Activated CD4-positive, alpha-beta T cell treated with anti-CD3 and anti-CD28 coated beads for 36 hours (primary cell): ENCODE measurements at regions of chr5 and their contacts with region 1.

Region 1: DNA sequence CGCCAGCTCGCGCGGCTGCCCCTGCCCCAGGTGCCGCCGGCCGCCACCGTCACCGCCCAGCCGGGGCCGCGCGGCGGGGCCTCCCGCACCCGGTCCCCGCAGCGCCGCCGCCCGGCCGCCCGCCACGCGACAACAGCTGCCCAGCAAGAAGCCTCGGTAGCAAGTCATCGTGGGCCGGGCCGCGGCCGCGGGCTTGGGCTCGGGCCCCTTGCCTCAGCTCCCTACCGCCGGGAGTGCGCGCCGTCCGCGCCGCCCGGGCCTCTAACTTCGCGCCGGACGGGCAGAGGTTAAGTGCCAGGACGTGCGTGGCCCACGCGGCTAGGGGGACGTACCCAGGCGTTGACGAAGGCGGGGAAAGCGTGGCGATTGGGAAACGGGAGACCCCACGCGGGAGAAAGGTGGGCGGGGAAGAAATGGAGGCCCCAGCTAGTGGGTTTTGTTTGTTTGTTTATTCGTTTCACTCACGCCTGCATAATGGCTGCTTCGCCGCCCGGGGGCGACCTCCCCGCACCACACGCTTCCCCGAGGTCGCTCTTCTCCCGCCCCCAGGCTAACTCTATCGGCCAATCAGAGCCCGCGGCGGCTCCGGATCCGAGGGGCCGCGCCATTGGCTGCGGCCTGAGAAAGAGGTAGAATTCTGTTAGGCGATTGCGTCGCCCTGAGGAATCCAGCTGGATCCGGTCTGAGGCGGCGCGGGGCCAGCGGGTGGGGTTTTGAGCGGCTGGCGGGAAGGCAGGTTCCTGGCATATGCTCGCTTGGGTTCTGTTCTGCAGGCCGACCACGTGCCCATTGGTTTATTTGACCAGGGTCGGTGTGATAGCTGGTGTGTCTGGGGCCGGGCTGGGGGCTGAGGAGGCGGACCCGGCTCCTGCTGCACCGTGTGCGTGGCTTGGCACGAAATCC is at the start of gene NADK2:
- DNase-seq: peak; percentile 97
- ATAC-seq: peak; percentile 94
- H3K4me3 Mint-ChIP-seq: peak within 1 kb of the TSS; percentile 76
- H3K27ac Mint-ChIP-seq: peak within 1 kb of the TSS; percentile 98
- H3K4me1 Mint-ChIP-seq: peaks cover 44% of the 10 kb centered on the region
- H3K27me3 Mint-ChIP-seq: no peaks in the 10 kb centered on the region
- total RNA-seq, gene NADK2: 16.1 to 19.3 TPM

Region 2: GRCh38 chr5:34929150-34929719 is 1312.6 kb before region 1 on chr5 and contains the start of gene DNAJC21:
- CTCF ChIA-PET with region 1: no interaction called
- POLR2A ChIA-PET with region 1: no interaction called
- intact Hi-C with region 1: loop called in 1 of 2 experiments (anchors 5 kb)
- DNase-seq: peak; percentile 99
- ATAC-seq: peak; percentile 95
- H3K4me3 Mint-ChIP-seq: peak within 1 kb of the TSS; percentile 90
- H3K27ac Mint-ChIP-seq: peak within 1 kb of the TSS; percentile 93
- H3K4me1 Mint-ChIP-seq: peaks cover 43% of the 10 kb centered on the region
- H3K27me3 Mint-ChIP-seq: no peaks in the 10 kb centered on the region
- total RNA-seq, gene DNAJC21: 58.5 to 58.6 TPM

Region 3: DNA sequence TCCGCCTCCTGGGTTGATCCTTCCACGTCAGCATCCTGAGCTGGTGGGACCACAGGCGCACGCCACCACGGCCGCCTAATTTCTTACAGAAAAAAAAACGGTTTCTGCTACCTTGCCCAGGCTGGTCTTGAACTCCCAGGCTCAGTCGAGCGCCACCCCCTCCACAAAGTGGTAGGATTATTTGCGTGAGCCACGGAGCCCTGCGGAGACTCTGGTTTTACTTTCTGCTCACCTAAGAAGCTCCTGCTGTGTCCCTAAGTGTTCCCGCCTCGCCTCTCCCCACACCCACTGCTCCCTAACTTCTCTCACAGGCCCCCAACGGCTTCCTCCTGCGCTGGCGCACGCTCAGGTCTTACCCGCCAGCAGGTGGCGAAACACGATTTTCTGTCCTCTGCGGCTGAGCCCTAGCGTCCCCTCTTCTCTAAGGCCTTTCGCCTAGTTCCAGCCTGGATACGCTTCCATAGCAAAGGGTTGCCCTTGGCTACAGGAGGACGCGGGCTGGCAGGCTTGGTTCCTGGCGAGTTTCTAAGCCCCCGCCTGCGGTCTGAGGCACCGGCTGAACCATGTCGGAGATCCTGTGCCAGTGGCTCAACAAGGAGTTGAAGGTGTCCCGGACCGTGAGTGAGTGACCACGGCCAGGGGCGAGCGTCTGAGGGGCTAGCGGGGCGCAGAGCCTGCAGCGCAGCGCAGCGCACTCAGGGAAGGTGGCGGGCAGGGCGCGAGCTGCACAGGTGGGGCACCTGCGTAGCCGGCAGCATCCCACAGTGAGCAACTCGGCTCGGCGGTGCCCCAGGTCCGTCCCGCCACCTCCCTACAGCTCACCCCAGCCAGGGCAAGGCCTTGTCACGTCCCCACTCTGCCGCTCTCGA is 624.2 kb before region 1 on chr5 and contains the start of gene SPEF2:
- CTCF ChIA-PET with region 1: no interaction called
- POLR2A ChIA-PET with region 1: no interaction called
- intact Hi-C with region 1: loop called in 1 of 2 experiments (anchors 2 kb)
- DNase-seq: peak; percentile 91
- ATAC-seq: peak; percentile 92
- H3K4me3 Mint-ChIP-seq: peak within 1 kb of the TSS; percentile 83
- H3K27ac Mint-ChIP-seq: peak within 1 kb of the TSS; percentile 99
- H3K4me1 Mint-ChIP-seq: peaks cover 31% of the 10 kb centered on the region
- H3K27me3 Mint-ChIP-seq: no peaks in the 10 kb centered on the region
- total RNA-seq, gene SPEF2: 14.1 to 14.6 TPM

Region 4: DNA sequence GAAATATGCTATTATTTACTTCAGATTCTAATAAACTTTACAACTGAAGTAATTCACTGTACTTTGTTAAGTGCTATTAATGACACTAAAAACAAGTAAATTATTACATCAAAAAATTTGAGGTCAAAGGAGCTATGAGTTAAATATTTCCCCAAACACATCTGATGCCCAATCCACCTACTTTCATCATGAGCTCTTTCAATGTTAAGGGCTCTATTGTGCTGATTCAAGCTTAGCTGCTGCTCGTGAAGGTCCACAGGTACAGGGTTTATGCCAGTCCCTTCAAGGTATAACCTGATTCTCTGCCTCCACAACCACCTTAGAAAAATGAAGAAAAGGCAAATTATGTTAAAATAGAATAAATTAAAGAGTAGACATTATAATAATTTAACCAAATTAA is 24.3 kb before region 1 on chr5:
- CTCF ChIA-PET with region 1: interaction called, 10 read pairs
- POLR2A ChIA-PET with region 1: no interaction called
- intact Hi-C with region 1: no loop called
- DNase-seq: no peak
- ATAC-seq: no peak
- H3K4me3 Mint-ChIP-seq: no peak overlapping the region
- H3K27ac Mint-ChIP-seq: no peak overlapping the region
- H3K4me1 Mint-ChIP-seq: no peaks in the 10 kb centered on the region
- H3K27me3 Mint-ChIP-seq: no peaks in the 10 kb centered on the region

Region 5: GRCh38 chr5:36444582-36445418 is 202.9 kb after region 1 on chr5:
- CTCF ChIA-PET with region 1: no interaction called
- POLR2A ChIA-PET with region 1: no interaction called
- intact Hi-C with region 1: no loop called
- DNase-seq: no peak
- ATAC-seq: no peak
- H3K4me3 Mint-ChIP-seq: no peak overlapping the region
- H3K27ac Mint-ChIP-seq: no peak overlapping the region
- H3K4me1 Mint-ChIP-seq: peaks cover 6% of the 10 kb centered on the region
- H3K27me3 Mint-ChIP-seq: peaks cover 6% of the 10 kb centered on the region

Region 6: GRCh38 chr5:36875790-36876388 is 634.0 kb after region 1 on chr5:
- CTCF ChIA-PET with region 1: no interaction called
- POLR2A ChIA-PET with region 1: no interaction called
- intact Hi-C with region 1: loop called in 1 of 2 experiments (anchors 2 kb)
- DNase-seq: peak; percentile 85
- ATAC-seq: peak; percentile 54
- H3K4me3 Mint-ChIP-seq: peak overlapping the region; percentile 89
- H3K27ac Mint-ChIP-seq: peak overlapping the region; percentile 100
- H3K4me1 Mint-ChIP-seq: peaks cover 31% of the 10 kb centered on the region
- H3K27me3 Mint-ChIP-seq: no peaks in the 10 kb centered on the region

Region 7: DNA sequence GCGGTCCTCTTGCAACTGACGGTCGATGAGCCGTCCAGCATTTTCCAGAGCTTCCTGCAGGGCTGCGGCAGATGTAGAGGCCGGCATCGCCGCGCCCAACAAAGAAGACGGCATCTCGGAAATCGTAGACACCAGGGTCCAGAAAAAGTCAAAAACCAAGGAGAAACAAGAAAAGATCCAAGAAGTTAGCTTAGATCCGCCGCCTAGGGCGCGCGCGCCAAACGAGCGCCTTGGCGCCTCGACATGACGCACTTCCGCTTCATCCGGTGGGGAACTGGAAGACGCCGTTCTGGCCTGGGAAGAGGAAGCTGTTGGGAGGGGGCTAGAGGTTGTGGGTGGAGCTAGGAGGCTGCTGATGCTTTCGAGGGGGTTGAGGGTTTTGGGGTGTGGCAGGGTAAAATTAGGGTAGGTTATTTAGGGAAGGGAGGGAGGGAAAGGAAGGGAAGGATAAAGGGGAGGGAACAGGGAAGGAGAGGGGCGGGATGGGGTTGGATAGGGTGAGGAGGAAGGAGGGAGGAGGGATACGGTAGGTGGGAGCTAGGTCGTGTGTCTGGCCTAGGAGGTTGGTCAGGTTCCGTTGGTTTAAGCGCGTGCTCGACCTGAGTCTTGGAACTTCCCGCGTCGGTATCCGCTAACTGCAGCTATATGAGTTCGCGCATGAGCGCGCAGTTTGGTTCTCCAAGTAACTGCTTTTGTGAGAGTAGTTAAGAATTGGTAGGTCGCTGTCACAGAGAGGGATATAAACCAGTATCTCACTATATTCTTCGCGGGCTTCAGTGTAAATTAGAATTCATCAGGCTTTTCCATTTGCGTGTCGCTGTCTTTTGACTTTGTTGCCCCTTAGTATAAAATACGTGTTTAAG is 1129.2 kb after region 1 on chr5 and contains the start of gene NUP155:
- CTCF ChIA-PET with region 1: no interaction called
- POLR2A ChIA-PET with region 1: no interaction called
- intact Hi-C with region 1: loop called (anchors 1 to 5 kb)
- DNase-seq: peak; percentile 95
- ATAC-seq: peak; percentile 95
- H3K4me3 Mint-ChIP-seq: peak within 1 kb of the TSS; percentile 98
- H3K27ac Mint-ChIP-seq: peak within 1 kb of the TSS; percentile 99
- H3K4me1 Mint-ChIP-seq: peaks cover 35% of the 10 kb centered on the region
- H3K27me3 Mint-ChIP-seq: no peaks in the 10 kb centered on the region
- total RNA-seq, gene NUP155: 94.9 to 113 TPM